A673 (cell line): ENCODE measurements at regions of chr12 and their contacts with region 1.

Region 1: GRCh38 chr12:12266873-12267741 is at the start of gene LRP6:
- DNase-seq: peak; percentile 97
- H3K4me3 ChIP-seq: peak within 1 kb of the TSS; percentile 90
- H3K27ac ChIP-seq: peak within 1 kb of the TSS; percentile 100
- H3K4me1 ChIP-seq: peaks cover 16% of the 10 kb centered on the region
- H3K27me3 ChIP-seq: no peaks in the 10 kb centered on the region
- CTCF ChIP-seq: no peak
- total RNA-seq, gene LRP6: 97.4 and 108 TPM in 2 replicates

Region 2: DNA sequence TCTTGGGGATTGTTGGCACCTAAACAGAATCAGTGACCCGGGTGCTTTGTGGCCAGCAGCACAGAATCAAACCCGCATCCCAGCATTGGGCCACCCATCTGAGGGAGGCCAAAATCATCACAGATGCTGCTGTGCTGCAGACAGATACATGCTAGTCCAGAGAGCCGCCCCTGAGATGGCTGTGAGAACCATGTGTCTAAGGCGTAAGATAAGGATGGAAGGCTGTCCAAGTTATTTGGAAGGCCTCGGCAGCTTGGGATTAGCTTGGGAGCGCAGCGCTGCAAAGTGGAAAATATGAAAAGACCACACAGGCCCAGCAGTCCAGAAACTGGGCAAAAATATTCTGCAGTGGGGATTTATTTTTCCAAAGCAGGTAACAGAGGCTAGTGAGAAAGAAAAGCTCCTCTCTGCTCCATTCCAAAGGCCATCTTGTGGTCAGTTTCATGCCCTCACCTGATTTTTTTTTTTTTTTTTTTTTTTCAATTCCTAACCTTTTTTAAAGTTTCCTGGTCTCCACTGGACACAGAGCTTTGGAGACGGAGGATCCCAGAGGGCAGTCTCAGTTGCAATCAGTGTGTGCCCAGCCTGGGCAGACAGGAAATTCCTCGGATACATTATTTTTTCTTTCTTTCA is 375.2 kb before region 1 on chr12:
- CTCF ChIA-PET with region 1: no interaction called
- POLR2A ChIA-PET with region 1: no interaction called
- intact Hi-C with region 1: no loop called
- DNase-seq: no peak
- H3K4me3 ChIP-seq: no peak overlapping the region
- H3K27ac ChIP-seq: no peak overlapping the region
- H3K4me1 ChIP-seq: no peaks in the 10 kb centered on the region
- H3K27me3 ChIP-seq: no peaks in the 10 kb centered on the region
- CTCF ChIP-seq: 0 out of 2 replicates have a peak, but pooled peaks have one; percentile 16

Region 3: GRCh38 chr12:12147111-12147510 is 120.0 kb before region 1 on chr12:
- CTCF ChIA-PET with region 1: no interaction called
- POLR2A ChIA-PET with region 1: no interaction called
- intact Hi-C with region 1: loop called (anchors 10 kb)
- DNase-seq: no peak
- H3K4me3 ChIP-seq: no peak overlapping the region
- H3K27ac ChIP-seq: no peak overlapping the region
- H3K4me1 ChIP-seq: no peaks in the 10 kb centered on the region
- H3K27me3 ChIP-seq: no peaks in the 10 kb centered on the region
- CTCF ChIP-seq: no peak

Region 4: GRCh38 chr12:12282761-12283425 is 15.8 kb after region 1 on chr12:
- CTCF ChIA-PET with region 1: interaction called, 10 read pairs
- POLR2A ChIA-PET with region 1: no interaction called
- intact Hi-C with region 1: no loop called
- DNase-seq: peak; percentile 82
- H3K4me3 ChIP-seq: peak overlapping the region; percentile 1
- H3K27ac ChIP-seq: peak overlapping the region; percentile 60
- H3K4me1 ChIP-seq: peaks cover 31% of the 10 kb centered on the region
- H3K27me3 ChIP-seq: no peaks in the 10 kb centered on the region
- CTCF ChIP-seq: no peak

Region 5: DNA sequence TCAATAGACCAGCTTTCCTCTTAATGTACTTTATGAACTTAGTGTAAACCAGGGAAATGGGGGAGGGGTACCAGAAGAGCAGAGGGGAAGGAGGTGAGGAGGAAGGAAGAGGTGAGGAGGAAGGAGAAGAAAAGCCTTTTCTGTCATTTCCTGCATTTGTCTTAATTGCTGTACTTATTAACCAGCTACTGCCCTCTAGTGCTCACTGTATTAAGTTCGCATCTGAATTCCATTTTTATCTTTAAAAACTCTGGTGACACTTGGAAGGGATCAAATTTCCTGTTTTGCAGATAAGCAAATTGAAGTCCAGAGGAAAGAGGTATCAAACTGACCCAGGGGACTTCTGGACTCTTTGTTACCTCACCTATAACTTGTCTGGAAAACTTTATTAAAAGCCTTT is 60.7 kb after region 1 on chr12:
- CTCF ChIA-PET with region 1: no interaction called
- POLR2A ChIA-PET with region 1: no interaction called
- intact Hi-C with region 1: loop called (anchors 5 kb)
- DNase-seq: peak; percentile 86
- H3K4me3 ChIP-seq: no peak overlapping the region
- H3K27ac ChIP-seq: peak overlapping the region; percentile 51
- H3K4me1 ChIP-seq: peaks cover 19% of the 10 kb centered on the region
- H3K27me3 ChIP-seq: no peaks in the 10 kb centered on the region
- CTCF ChIP-seq: peak; percentile 76